ENCODE measurements at regions of chr15 and their contacts with region 1.

Region 1: GRCh38 chr15:29747837-29748417 is 74.3 kb downstream of the TJP1 start:
- DNase-seq: no peak
- H3K4me3 ChIP-seq: no peak overlapping the region
- H3K27ac ChIP-seq: no peak overlapping the region
- H3K4me1 ChIP-seq: no peaks in the 10 kb centered on the region
- H3K27me3 ChIP-seq: no peaks in the 10 kb centered on the region
- CTCF ChIP-seq: peak in 3 of 4 experiments; percentile 35 to 51 (median 50)
- POLR2A ChIP-seq: no peak

Region 2: DNA sequence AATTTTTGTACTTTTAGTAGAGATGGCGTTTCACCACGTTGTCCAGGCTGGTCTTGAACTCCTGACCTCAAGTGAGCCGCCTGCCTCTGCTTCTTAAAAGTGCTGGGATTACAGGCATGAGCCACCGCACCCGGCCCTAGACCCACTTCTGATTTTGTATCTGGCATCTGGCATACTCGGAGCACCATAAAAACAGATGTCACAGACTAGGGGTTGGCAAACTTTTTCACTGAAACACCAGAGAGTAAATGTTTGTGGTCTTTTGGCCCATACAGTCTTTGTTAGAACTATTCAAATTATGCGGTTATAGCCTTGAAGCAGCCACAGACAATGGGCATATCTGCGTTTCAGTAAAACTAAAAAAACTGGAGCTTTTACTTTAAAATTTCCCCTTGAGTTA is 36.4 kb before region 1 on chr15:
- intact Hi-C with region 1: no loop called
- DNase-seq: no peak
- H3K4me3 ChIP-seq: no peak overlapping the region
- H3K27ac ChIP-seq: no peak overlapping the region
- H3K4me1 ChIP-seq: no peaks in the 10 kb centered on the region
- H3K27me3 ChIP-seq: no peaks in the 10 kb centered on the region
- CTCF ChIP-seq: no peak
- POLR2A ChIP-seq: no peak

Region 3: GRCh38 chr15:29805043-29805707 is 57.2 kb after region 1 on chr15:
- intact Hi-C with region 1: no loop called
- DNase-seq: peak; percentile 68
- H3K4me3 ChIP-seq: no peak overlapping the region
- H3K27ac ChIP-seq: peak overlapping the region in 1 of 2 donors; percentile 40
- H3K4me1 ChIP-seq: peaks cover 3% of the 10 kb centered on the region
- H3K27me3 ChIP-seq: no peaks in the 10 kb centered on the region
- CTCF ChIP-seq: no peak
- POLR2A ChIP-seq: no peak

Region 4: GRCh38 chr15:29925227-29926082 is 177.5 kb after region 1 on chr15:
- intact Hi-C with region 1: loop called (anchors 5 kb)
- DNase-seq: peak; percentile 34
- H3K4me3 ChIP-seq: no peak overlapping the region
- H3K27ac ChIP-seq: no peak overlapping the region
- H3K4me1 ChIP-seq: no peaks in the 10 kb centered on the region
- H3K27me3 ChIP-seq: no peaks in the 10 kb centered on the region
- CTCF ChIP-seq: peak in 3 of 4 experiments; percentile 60 to 64 (median 63)
- POLR2A ChIP-seq: no peak

Measured in prostate gland (tissue), 2 donors.